Gastrocnemius medialis (tissue), 4 donors: ENCODE measurements at regions of chr1 and their contacts with region 1.

Region 1: GRCh38 chr1:58546520-58547308 is at the start of gene OMA1:
- DNase-seq: peak; percentile 93 to 97
- ATAC-seq: peak; percentile 95 to 96
- H3K4me3 ChIP-seq: peak within 1 kb of the TSS; percentile 78 to 92 (median 84)
- H3K27ac ChIP-seq: peak within 1 kb of the TSS; percentile 99
- H3K4me1 ChIP-seq: peaks cover 5 to 9% of the 10 kb centered on the region in 2 donors
- H3K27me3 ChIP-seq: no peaks in the 10 kb centered on the region
- CTCF ChIP-seq: peak; percentile 95 to 99 (median 98)
- POLR2A ChIP-seq: peak; percentile 78 to 81
- total RNA-seq, gene OMA1: 11.7 to 23.7 (median 19.3) TPM

Region 2: DNA sequence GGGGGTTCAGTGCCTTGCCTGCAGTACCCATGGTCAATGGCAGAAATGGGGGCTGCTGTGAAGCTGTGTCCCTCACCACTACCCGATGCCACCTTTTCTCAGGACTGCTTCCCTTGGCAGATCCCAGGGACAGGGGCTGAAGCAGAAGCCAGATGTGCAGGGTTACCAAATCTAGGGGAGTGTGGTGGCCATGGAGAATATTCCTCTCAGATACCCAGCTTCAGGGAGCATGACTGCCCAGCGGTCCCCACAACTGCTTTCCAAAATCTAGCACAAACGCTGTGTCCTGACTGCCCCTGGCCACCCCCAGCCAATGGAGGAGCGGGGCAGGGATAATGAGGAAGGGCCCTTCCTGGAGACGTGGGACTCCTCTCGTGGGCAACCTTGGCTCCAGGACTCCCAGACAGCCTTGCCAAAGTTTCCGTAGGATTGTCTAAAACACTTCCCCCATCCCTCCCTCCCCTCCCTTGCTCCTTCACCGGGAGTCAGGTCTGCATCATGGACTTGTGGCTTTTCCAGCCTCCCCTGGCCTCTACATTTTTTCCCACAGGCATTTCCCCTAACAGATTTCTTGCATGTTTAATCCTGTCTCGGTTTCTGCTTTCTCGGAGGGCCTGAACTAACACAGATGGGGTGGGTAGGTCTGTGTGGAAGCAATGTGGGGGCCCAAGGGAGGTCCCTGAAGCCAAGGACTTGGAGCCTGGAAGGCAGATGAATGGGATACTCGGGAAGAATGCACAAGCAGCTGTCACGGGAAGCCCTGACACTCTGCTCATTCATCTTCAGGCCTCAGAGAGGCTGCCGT is 80.7 kb before region 1 on chr1:
- in situ Hi-C with region 1: no loop called
- intact Hi-C with region 1: no loop called
- DNase-seq: no peak
- ATAC-seq: no peak
- H3K4me3 ChIP-seq: no peak overlapping the region
- H3K27ac ChIP-seq: no peak overlapping the region
- H3K4me1 ChIP-seq: peaks cover 0 to 7% of the 10 kb centered on the region in 2 donors
- H3K27me3 ChIP-seq: no peaks in the 10 kb centered on the region
- CTCF ChIP-seq: no peak
- POLR2A ChIP-seq: no peak

Region 3: DNA sequence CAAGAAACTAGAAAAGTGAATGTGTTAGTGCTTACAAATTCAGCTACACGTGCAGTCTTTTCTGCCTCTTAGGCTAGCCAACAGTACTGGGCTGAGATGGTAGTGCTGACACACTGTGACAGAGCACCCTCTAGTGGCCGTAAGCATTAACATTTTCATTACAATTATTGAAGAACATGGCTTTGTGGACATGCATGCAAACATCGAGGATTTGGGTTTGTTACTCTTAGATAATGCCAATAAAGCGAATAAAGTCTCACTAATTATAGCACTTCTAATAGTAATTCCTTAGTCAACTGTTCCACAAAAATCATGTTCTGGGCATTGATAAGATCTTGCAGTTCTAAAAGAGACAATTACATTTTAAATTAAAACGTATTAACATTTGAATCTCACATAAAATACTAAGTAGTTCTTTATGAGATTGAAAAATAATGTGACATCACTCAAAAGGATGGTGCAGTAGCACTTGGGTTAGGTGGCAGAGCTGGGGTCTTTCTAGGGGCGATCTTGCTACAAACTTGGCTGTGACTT is 106.0 kb after region 1 on chr1:
- in situ Hi-C with region 1: no loop called
- intact Hi-C with region 1: loop called (anchors 1 kb)
- DNase-seq: peak; percentile 11 to 43
- ATAC-seq: peak; percentile 78 to 89
- H3K4me3 ChIP-seq: no peak overlapping the region
- H3K27ac ChIP-seq: no peak overlapping the region
- H3K4me1 ChIP-seq: peaks cover 3 to 5% of the 10 kb centered on the region in 2 donors
- H3K27me3 ChIP-seq: no peaks in the 10 kb centered on the region
- CTCF ChIP-seq: peak; percentile 60 to 83 (median 75)
- POLR2A ChIP-seq: no peak

Region 4: DNA sequence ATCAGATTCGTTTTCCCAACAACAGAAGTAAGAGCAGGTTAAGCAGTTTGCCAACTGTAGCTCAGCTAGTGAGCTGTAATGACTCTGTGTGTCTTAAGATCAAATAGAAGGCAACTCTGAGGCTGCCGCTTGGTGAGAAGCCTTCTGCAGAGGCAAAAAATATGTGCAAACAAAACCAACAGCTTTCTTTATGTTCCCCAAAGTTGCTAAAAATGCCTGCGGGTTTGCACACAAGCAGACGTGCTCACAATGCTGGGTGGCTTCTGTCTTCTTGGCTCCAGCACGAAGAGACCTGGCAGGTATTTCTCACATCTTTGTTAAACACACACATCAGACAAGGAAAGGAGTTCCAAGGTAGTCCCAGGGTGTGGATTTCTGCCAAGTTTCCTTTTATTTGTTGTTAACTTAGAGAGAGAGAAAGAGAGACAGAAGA is 396.1 kb after region 1 on chr1:
- in situ Hi-C with region 1: no loop called
- intact Hi-C with region 1: no loop called
- DNase-seq: no peak
- ATAC-seq: no peak
- H3K4me3 ChIP-seq: no peak overlapping the region
- H3K27ac ChIP-seq: no peak overlapping the region
- H3K4me1 ChIP-seq: peaks cover 0 to 3% of the 10 kb centered on the region in 2 donors
- H3K27me3 ChIP-seq: no peaks in the 10 kb centered on the region
- CTCF ChIP-seq: no peak
- POLR2A ChIP-seq: no peak